ENCODE measurements at regions of chr15 and their contacts with region 1.

Region 1: GRCh38 chr15:73637527-73637926 is 4.3 kb upstream of the NPTN start:
- DNase-seq: no peak
- H3K4me3 ChIP-seq: no peak overlapping the region
- H3K27ac ChIP-seq: no peak overlapping the region
- H3K4me1 ChIP-seq: peaks cover 0 to 30% (median 17%) of the 10 kb centered on the region in 6 donors
- H3K27me3 ChIP-seq: peaks cover 0 to 11% (median 0%) of the 10 kb centered on the region in 7 donors
- CTCF ChIP-seq: no peak
- POLR2A ChIP-seq: no peak

Region 2: DNA sequence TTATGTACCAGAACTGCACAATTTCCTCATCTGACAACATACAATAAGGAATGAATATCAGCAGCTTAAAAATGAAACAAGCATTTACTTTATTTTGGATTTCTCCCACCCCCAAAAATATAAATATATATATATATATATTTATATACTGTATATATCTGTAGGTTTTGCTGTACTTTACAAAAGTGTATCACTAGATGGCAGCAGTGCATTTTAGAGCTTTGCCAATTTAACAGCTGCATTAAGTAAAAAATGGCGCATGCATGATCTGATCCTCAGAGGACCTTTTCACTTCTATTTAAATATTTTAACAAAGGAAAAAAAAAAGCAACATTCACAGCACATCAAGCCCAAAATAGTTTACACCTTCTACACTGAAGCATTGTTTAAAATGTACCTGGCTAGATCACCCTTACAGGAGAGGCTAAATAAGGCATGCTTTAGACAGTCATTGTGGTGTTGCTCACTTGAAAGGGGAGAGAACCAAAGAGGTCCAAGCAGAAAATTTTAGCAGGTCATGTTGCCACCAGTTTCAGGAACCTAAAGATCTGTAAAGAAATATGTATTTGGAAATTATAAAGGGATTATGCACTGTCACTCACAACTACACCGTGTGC is 76.9 kb before region 1 on chr15:
- intact Hi-C with region 1: loop called (anchors 5 kb)
- DNase-seq: no peak
- H3K4me3 ChIP-seq: no peak overlapping the region
- H3K27ac ChIP-seq: no peak overlapping the region
- H3K4me1 ChIP-seq: peaks cover 0 to 24% (median 3%) of the 10 kb centered on the region in 6 donors
- H3K27me3 ChIP-seq: no peaks in the 10 kb centered on the region
- CTCF ChIP-seq: peak in 6 of 11 experiments; percentile 31 to 62 (median 48)
- POLR2A ChIP-seq: no peak

Region 3: DNA sequence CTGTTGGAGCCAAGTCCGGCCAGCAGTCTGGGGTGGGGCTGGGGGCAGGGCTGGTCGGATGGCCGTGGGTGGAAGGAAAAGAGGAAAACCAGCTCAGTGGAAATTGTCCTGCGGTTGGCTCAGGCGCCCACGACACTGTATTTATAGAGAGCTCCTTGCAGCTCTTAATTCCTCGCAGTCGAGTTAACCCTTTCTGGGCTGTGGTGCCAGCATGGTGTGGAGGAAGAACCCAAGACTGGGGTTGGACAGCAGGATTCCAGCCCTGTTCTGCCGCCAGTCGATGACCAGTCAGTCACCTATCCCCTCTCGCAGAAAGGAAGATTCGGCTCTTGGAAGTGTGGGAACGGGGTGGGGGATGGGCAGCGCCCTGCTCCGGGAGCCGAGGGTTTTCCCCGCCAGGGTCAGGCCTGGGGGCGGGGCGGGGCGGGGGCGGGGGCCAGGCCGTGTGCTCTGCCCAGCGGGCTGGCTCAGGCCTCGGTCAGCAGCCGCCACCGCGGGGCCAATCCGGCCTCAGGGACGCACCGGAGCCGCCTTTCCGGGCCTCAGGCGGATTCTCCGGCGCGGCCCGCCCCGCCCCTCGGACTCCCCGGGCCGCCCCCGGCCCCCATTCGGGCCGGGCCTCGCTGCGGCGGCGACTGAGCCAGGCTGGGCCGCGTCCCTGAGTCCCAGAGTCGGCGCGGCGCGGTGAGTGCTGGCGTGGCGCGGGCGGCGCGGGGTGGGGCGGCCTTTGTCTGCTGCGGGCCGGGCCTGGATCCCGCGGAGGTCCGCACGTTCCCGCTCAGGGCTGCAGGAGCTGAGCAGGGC is 46.5 kb after region 1 on chr15 and contains the start of gene CD276:
- intact Hi-C with region 1: no loop called
- DNase-seq: peak; percentile 82
- H3K4me3 ChIP-seq: peak within 1 kb of the TSS; percentile 47 to 76 (median 62)
- H3K27ac ChIP-seq: peak within 1 kb of the TSS; percentile 20 to 79 (median 64)
- H3K4me1 ChIP-seq: peaks cover 4 to 58% (median 41%) of the 10 kb centered on the region in 6 donors
- H3K27me3 ChIP-seq: peaks cover 0 to 71% (median 13%) of the 10 kb centered on the region in 7 donors
- CTCF ChIP-seq: no peak
- POLR2A ChIP-seq: no peak
- total RNA-seq, gene CD276: 17.8 to 95.6 (median 34.9) TPM

Region 4: GRCh38 chr15:73700041-73700842 is 62.7 kb after region 1 on chr15:
- intact Hi-C with region 1: loop called (anchors 5 kb)
- DNase-seq: peak; percentile 87
- H3K4me3 ChIP-seq: no peak overlapping the region
- H3K27ac ChIP-seq: no peak overlapping the region
- H3K4me1 ChIP-seq: peaks cover 18 to 45% (median 33%) of the 10 kb centered on the region in 6 donors
- H3K27me3 ChIP-seq: peaks cover 0 to 44% (median 0%) of the 10 kb centered on the region in 7 donors
- CTCF ChIP-seq: peak; percentile 75 to 95 (median 89)
- POLR2A ChIP-seq: no peak